Left colon (tissue), 2 donors: ENCODE measurements at regions of chr19 and their contacts with region 1.

Region 1: DNA sequence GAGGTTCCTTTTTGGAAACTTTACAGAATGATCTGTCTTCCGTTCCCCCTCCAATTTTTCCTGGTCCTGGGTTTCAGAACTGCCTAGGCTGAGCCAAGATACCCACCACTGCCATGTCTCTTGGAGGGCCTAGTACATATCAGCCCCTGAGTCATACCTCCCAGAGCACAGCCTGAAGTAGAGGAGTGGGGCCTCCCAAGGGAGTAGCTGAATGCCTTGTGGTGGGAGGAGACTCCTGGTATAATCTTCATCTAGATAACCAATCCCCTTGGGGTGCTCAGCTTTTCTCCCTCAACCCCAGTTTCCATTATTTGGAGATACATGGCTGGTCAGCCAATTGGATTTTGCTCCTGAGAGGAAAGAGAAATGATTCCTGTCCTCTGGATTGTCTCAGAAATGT is 30.3 kb downstream of the ZNF763 start:
- DNase-seq: no peak
- ATAC-seq: no peak

Region 2: GRCh38 chr19:11924886-11925650 is 70.1 kb before region 1 on chr19 and contains the start of gene ZNF700:
- intact Hi-C with region 1: loop called (anchors 5 to 10 kb)
- DNase-seq: peak; percentile 97 to 99
- ATAC-seq: peak; percentile 93
- total RNA-seq, gene ZNF700: 16.4 to 20.0 TPM